T-cell (primary cell): ENCODE measurements at regions of chr17 and their contacts with region 1.

Region 1: DNA sequence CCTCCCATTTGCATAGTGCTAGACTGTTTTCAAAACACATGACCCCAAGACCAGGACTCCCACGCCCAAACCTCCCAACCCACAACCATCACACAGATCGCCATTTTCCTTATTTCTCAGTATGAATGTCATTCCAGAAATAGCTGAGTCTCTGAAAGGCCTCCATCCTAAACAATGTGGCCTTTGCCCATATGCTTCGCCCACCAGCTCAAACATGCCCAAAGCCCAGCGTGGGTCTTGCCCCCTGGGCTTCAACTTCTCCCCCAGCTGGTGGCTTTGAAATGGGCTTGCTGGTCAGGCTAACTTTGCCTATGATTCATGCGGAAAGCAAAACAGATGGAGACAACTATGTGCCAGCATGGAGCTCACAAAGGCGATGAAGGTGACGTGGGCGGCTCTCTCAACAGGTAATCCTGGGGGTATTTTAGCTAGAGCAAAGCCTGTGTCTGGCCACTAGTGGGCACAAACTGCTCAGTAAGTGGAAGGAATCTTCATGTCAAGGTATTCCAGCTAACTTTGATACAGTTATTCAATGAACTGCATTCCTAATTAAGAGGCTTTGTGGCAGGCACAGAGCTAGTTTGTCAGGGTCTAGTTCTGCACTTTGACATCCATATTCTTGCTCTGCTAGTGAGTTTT is 17.1 kb downstream of the PMP22 start:
- DNase-seq: no peak
- ATAC-seq: no peak
- H3K4me3 ChIP-seq: no peak overlapping the region
- H3K4me3 Mint-ChIP-seq: no peak overlapping the region
- H3K27ac ChIP-seq: no peak overlapping the region
- H3K27ac Mint-ChIP-seq: no peak overlapping the region
- H3K4me1 ChIP-seq: no peaks in the 10 kb centered on the region
- H3K4me1 Mint-ChIP-seq: no peaks in the 10 kb centered on the region
- H3K27me3 ChIP-seq: no peaks in the 10 kb centered on the region
- H3K27me3 Mint-ChIP-seq: peaks cover 9 to 18% of the 10 kb centered on the region in 2 donors

Region 2: DNA sequence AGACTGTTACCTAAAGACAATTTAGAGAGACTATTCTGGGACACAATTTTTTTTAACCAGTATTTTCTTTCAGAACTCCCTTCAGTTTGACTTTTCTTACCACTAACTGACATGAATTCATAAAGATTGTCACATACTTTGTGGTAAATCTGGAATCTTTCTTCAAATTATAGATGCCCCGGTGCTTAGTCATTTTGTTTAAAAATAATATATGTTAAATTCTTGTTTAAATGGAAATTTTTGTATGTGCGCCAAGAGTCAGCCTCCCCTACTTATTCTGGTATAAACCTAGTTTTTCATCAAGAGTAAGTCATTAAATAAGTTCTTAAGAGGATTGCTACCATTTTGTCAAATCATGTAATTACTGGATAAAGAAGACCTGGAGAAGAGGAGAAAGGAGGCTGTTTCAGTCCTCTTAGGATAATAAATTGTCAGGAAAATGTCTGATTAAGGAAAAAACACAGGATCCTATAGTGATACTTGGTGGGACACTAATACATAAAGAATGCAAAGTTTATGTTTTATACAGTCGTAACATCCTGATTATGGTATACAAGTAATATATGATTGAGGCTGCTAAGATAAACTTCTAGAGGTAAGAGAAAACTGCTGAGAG is 407.3 kb before region 1 on chr17:
- CTCF ChIA-PET with region 1: no interaction called
- POLR2A ChIA-PET with region 1: no interaction called
- DNase-seq: no peak
- ATAC-seq: no peak
- H3K4me3 ChIP-seq: no peak overlapping the region
- H3K4me3 Mint-ChIP-seq: no peak overlapping the region
- H3K27ac ChIP-seq: no peak overlapping the region
- H3K27ac Mint-ChIP-seq: no peak overlapping the region
- H3K4me1 ChIP-seq: no peaks in the 10 kb centered on the region
- H3K4me1 Mint-ChIP-seq: no peaks in the 10 kb centered on the region
- H3K27me3 ChIP-seq: no peaks in the 10 kb centered on the region
- H3K27me3 Mint-ChIP-seq: peaks cover 10 to 16% of the 10 kb centered on the region in 2 donors

Region 3: DNA sequence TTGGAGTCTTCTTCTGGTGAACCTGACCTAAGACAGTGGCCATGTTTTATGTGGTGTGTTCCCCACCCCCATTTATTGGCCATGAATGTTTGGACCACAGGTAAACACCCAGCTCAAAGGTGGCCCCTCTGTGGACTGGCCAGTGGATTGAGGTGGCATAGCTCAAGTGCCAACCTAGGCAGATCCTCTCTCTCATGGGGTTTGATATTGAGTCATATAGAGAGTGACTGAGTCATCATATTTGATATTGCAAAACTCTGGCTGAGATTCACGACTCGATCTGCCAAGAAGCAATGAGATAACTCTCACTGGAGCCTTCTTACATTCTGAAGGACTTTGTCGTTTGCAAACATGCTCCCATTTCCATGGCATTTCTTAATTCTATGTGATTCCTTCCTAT is 103.9 kb after region 1 on chr17:
- CTCF ChIA-PET with region 1: no interaction called
- POLR2A ChIA-PET with region 1: no interaction called
- DNase-seq: no peak
- ATAC-seq: no peak
- H3K4me3 ChIP-seq: no peak overlapping the region
- H3K4me3 Mint-ChIP-seq: no peak overlapping the region
- H3K27ac ChIP-seq: no peak overlapping the region
- H3K27ac Mint-ChIP-seq: no peak overlapping the region
- H3K4me1 ChIP-seq: no peaks in the 10 kb centered on the region
- H3K4me1 Mint-ChIP-seq: no peaks in the 10 kb centered on the region
- H3K27me3 ChIP-seq: peaks cover 0 to 7% of the 10 kb centered on the region in 2 experiments
- H3K27me3 Mint-ChIP-seq: peaks cover 50% of the 10 kb centered on the region in 2 donors

Region 4: GRCh38 chr17:15502369-15503112 is 254.5 kb after region 1 on chr17:
- CTCF ChIA-PET with region 1: interaction called in 1 of 2 experiments, 16 read pairs
- POLR2A ChIA-PET with region 1: no interaction called
- DNase-seq: peak; percentile 19 to 73 (median 53)
- ATAC-seq: peak; percentile 61 to 77 (median 77)
- H3K4me3 ChIP-seq: no peak overlapping the region
- H3K4me3 Mint-ChIP-seq: no peak overlapping the region
- H3K27ac ChIP-seq: no peak overlapping the region
- H3K27ac Mint-ChIP-seq: no peak overlapping the region
- H3K4me1 ChIP-seq: peaks cover 0 to 11% of the 10 kb centered on the region in 2 experiments
- H3K4me1 Mint-ChIP-seq: peaks cover 12 to 14% (median 12%) of the 10 kb centered on the region in 3 donors
- H3K27me3 ChIP-seq: no peaks in the 10 kb centered on the region
- H3K27me3 Mint-ChIP-seq: no peaks in the 10 kb centered on the region